ENCODE measurements at regions of chr7 and their contacts with region 1.

Region 1: GRCh38 chr7:45259966-45260646 is 102.5 kb downstream of the RAMP3 start:
- DNase-seq: peak; percentile 36 to 81 (median 63)
- ATAC-seq: peak; percentile 57
- H3K4me3 ChIP-seq: no peak overlapping the region
- H3K4me3 Mint-ChIP-seq: no peak overlapping the region
- H3K27ac ChIP-seq: no peak overlapping the region
- H3K27ac Mint-ChIP-seq: no peak overlapping the region
- H3K4me1 ChIP-seq: peaks cover 4% of the 10 kb centered on the region
- H3K4me1 Mint-ChIP-seq: peaks cover 5% of the 10 kb centered on the region
- H3K27me3 ChIP-seq: no peaks in the 10 kb centered on the region
- H3K27me3 Mint-ChIP-seq: peaks cover 20% of the 10 kb centered on the region
- CTCF ChIP-seq: peak; percentile 97

Region 2: DNA sequence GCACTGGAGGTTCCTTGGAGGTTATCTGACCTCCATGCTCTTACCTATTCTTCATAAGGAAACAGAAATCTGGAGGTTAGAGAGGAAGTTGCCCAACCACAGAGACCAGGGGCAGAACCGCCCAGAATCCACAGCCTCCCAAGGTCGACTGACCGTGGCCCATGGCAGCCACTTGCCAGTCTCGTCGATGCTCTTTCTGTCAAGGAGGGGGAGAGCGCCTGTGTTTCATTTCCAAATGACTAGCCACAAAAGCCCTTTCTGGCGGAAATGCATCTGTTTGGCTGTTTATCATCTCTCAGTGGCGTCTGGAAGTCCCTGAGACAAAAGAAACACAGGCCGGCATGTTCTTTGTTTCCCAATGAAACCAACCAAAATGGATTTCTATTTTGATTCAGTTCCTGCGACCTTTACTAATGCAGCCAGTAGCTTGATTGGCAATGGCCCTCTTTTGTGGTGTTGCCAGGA is 99.7 kb before region 1 on chr7:
- CTCF ChIA-PET with region 1: interaction called, 53 read pairs
- POLR2A ChIA-PET with region 1: no interaction called
- intact Hi-C with region 1: no loop called
- DNase-seq: no peak
- ATAC-seq: no peak
- H3K4me3 ChIP-seq: no peak overlapping the region
- H3K4me3 Mint-ChIP-seq: no peak overlapping the region
- H3K27ac ChIP-seq: no peak overlapping the region
- H3K27ac Mint-ChIP-seq: no peak overlapping the region
- H3K4me1 ChIP-seq: no peaks in the 10 kb centered on the region
- H3K4me1 Mint-ChIP-seq: peaks cover 8% of the 10 kb centered on the region
- H3K27me3 ChIP-seq: peaks cover 4 to 7% of the 10 kb centered on the region in 2 experiments
- H3K27me3 Mint-ChIP-seq: peaks cover 21% of the 10 kb centered on the region
- CTCF ChIP-seq: no peak

Region 3: DNA sequence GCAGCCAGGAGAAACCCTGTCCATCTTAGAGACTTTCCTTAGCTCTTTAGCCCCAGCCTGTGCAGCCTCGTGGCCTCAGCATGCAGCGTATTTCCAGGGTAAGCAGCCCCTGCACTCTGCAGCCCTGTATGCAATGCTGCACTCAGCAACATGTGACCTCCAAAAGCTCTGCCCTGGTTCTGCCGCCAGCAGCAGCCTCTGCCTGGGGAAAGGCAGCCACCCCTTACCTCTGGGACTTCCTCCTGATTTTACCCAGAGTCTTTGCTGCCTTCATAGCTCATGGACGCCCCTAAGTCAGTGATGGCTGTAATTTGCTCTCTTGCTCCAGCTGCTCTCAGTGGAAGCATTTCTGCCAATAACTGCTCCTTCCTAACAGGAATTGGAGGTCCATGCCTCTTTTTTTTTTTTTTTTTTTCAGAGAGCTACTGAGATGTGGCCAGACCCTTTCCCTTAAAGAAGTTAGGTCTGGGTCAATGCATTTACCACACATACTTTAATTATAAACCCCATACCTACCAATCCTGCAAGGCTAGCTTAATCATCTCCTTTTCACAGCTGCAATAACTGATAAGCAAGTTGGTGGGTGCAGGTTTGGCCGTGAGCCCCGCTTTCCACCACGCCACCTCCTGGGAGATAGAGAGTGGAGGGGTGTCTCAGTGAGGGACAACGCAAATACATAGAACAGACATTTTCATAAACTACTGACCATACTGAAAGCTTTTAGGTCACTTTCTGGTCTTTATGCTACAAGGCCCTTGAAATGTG is 30.8 kb before region 1 on chr7:
- CTCF ChIA-PET with region 1: no interaction called
- POLR2A ChIA-PET with region 1: no interaction called
- intact Hi-C with region 1: no loop called
- DNase-seq: no peak
- ATAC-seq: no peak
- H3K4me3 ChIP-seq: no peak overlapping the region
- H3K4me3 Mint-ChIP-seq: no peak overlapping the region
- H3K27ac ChIP-seq: no peak overlapping the region
- H3K27ac Mint-ChIP-seq: no peak overlapping the region
- H3K4me1 ChIP-seq: no peaks in the 10 kb centered on the region
- H3K4me1 Mint-ChIP-seq: peaks cover 3% of the 10 kb centered on the region
- H3K27me3 ChIP-seq: peaks cover 0 to 2% of the 10 kb centered on the region in 2 experiments
- H3K27me3 Mint-ChIP-seq: peaks cover 33% of the 10 kb centered on the region
- CTCF ChIP-seq: no peak

Region 4: DNA sequence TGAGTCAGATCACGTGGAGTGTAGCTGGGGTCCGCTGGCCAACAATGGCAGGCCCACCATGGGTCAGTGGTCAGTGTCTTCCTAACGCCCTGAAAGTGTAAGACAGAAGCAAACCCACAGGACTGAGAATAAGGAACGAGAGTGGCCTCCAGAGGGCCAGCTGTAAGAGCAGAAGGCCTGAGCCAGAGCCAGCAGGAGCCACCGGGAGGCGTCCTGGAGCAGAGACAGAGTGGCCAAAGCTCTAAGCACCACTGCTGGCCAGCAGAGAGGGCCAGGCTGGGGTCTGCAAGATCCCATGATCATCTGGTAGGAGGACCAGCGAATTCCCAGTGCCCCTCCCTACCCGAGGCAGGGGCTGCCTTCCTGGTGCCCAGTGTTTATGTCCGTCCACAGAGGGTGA is 603.6 kb after region 1 on chr7:
- CTCF ChIA-PET with region 1: no interaction called
- POLR2A ChIA-PET with region 1: no interaction called
- intact Hi-C with region 1: loop called in 1 of 2 experiments (anchors 10 kb)
- DNase-seq: no peak
- ATAC-seq: no peak
- H3K4me3 ChIP-seq: no peak overlapping the region
- H3K4me3 Mint-ChIP-seq: no peak overlapping the region
- H3K27ac ChIP-seq: no peak overlapping the region
- H3K27ac Mint-ChIP-seq: no peak overlapping the region
- H3K4me1 ChIP-seq: no peaks in the 10 kb centered on the region
- H3K4me1 Mint-ChIP-seq: no peaks in the 10 kb centered on the region
- H3K27me3 ChIP-seq: peaks cover 0 to 6% of the 10 kb centered on the region in 2 experiments
- H3K27me3 Mint-ChIP-seq: peaks cover 13% of the 10 kb centered on the region
- CTCF ChIP-seq: no peak

Measured in CD8-positive, alpha-beta T cell (primary cell).